Breast epithelium (tissue), 4 donors: ENCODE measurements at regions of chr17 and their contacts with region 1.

Region 1: DNA sequence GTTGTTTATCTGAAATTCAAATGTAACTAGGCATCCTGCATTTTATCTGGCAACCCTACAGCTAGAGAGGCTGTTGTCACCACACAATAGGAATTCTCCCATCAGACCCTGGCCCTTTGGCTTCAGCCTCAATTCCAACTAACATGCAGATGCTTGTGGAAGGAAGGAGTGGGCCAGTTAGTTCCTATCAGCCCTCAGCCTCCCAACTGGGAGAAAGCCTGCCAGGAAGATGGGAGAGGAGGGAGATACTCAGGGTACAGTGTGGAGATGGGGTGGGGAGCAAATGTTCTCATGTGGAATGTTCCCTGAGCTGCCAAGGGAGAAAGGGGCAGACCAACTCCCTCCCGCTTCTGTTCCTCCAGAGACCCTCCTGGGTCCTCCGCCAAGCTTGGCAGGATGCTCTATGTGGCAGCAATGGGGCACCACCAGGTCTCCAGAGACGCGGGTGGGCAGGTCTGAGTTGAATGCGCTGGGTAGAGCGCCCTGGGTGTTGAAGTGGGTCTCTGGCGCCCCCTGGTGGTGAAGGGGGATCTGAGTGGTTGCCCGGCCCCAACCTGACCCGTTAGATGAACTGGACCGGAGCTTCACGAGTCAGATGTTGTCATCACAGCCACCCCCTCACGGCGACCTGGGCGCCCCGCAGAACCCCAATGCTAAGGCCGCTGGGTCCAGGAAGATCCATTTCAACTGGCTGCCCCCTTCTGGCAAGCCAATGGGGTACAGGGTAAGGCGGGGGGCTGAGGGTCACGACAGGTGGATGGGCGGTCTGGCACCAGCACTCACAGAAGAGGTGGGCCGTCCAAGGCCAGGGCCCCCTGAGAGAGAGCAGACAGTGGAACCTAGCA is 15.2 kb downstream of the GALK1 start:
- DNase-seq: peak; percentile 71 to 91
- H3K4me3 ChIP-seq: peak overlapping the region in 1 of 3 donors; percentile 12
- H3K27ac ChIP-seq: peak overlapping the region; percentile 6 to 45
- H3K4me1 ChIP-seq: peaks cover 0 to 5% of the 10 kb centered on the region in 2 donors
- H3K27me3 ChIP-seq: no peaks in the 10 kb centered on the region
- CTCF ChIP-seq: peak; percentile 79 to 94 (median 91)
- POLR2A ChIP-seq: no peak

Region 2: DNA sequence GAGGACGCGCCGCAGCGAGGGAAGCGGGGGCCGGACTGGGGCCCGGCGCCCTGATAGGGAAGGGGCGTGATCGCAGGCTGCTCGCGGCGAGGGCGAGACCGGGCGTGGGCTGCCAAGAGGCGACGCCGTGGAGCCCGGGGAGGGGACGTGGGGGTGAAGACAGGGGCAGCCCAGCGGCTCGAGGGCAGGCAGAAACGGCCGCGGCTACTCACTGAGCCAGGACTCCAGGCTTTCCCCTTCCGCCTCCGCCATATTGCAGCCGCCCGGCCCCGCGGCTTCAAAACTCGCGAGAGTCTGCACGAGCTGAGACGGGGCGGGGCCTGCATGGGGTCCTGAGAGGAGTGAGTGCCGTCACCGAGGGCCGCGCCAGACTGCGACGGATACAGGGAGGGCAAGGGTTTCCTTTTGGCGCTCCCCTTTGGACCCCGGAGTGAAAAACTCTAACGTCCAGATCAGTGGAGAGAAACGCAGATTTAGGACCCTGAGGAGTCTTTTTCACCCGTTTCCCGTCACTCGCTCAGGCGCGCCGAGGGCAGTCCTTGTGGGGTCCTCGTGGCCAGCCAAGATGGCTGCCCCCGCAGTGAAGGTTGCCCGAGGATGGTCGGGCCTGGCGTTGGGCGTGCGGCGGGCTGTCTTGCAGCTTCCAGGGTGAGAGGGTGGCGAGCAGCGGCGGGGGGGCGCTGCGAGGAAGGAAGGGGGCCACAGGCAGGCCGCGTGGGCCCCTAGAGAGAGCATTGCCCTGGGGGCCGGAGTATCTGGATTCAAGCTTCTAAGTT is 488.2 kb before region 1 on chr17 and contains the starts of genes GGA3 and MRPS7:
- intact Hi-C with region 1: no loop called
- DNase-seq: peak; percentile 95 to 96
- H3K4me3 ChIP-seq: peak within 1 kb of the TSS; percentile 89 to 100 (median 99)
- H3K27ac ChIP-seq: peak within 1 kb of the TSS; percentile 97 to 99
- H3K4me1 ChIP-seq: peaks cover 0 to 12% of the 10 kb centered on the region in 2 donors
- H3K27me3 ChIP-seq: no peaks in the 10 kb centered on the region
- CTCF ChIP-seq: peak in 1 of 3 donors; percentile 6
- POLR2A ChIP-seq: peak; percentile 59
- total RNA-seq, gene GGA3: 20.0 to 35.0 (median 32.8) TPM
- total RNA-seq, gene MRPS7: 37.0 to 46.5 (median 40.1) TPM

Region 3: DNA sequence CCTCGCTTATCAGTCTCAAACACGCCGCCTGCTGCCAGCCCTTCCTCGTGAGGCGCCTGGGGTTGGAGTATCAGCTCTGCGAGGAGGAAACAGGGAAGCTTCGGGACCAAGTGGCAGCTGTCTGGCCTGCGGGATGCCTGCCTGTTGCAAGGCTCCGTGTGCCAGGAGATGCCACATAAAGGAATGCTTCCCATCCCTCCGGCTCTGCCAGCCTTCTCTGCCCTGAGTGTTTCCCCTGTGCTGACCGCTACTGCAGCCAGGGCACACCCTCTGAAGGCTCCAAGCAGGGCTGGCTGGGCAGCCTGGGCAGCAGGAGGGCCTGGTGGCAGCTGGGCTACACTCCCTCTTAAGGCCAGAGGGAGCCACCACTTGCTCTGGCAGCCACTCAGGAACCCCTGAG is 114.0 kb before region 1 on chr17:
- intact Hi-C with region 1: loop called (anchors 5 kb)
- DNase-seq: no peak
- H3K4me3 ChIP-seq: no peak overlapping the region
- H3K27ac ChIP-seq: peak overlapping the region in 1 of 2 donors; percentile 90
- H3K4me1 ChIP-seq: peaks cover 13 to 15% of the 10 kb centered on the region in 2 donors
- H3K27me3 ChIP-seq: no peaks in the 10 kb centered on the region
- CTCF ChIP-seq: no peak
- POLR2A ChIP-seq: no peak

Region 4: GRCh38 chr17:75679706-75680442 is 69.9 kb before region 1 on chr17:
- intact Hi-C with region 1: loop called (anchors 2 kb)
- DNase-seq: peak in 1 of 2 donors; percentile 82
- H3K4me3 ChIP-seq: no peak overlapping the region
- H3K27ac ChIP-seq: peak overlapping the region; percentile 84 to 85
- H3K4me1 ChIP-seq: peaks cover 6 to 9% of the 10 kb centered on the region in 2 donors
- H3K27me3 ChIP-seq: no peaks in the 10 kb centered on the region
- CTCF ChIP-seq: peak in 2 of 3 donors; percentile 51 to 75
- POLR2A ChIP-seq: no peak

Region 5: DNA sequence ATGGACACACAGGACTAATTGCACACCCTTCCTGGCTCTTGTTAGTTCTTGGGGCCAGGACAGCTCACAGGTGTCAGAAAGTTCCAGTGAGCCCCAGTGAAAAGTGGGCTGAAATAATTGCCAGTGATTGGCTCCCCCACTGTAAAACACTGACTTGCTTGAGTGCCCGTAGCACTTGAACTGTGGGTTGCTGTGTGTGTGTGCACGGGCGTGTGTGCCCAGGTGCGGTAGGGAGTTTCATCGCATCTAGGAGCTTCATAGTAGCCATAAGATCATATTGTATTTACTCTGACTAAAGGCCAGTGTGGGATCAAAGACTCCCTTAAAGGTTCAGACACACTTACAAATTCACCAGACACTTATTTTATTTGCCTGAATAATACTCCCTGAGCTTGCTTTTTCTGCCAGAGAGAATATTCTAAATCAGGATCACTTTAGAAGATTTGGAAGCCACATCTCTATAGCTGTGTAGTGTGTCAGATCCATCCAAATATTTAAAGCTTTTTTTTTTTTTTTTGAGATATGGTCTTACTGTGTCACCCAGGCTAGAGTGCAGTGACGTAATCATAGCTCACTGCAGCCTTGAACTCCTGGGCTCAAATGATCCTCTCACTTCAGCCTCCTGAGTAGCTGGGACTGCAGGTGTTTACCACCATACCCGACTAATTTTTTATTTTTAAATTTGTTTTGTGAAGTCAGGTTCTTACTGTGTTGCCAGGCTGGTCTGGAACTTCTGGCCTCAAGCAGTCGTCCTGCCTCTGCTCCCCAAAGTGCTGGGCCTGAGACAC is 46.2 kb after region 1 on chr17:
- intact Hi-C with region 1: no loop called
- DNase-seq: no peak
- H3K4me3 ChIP-seq: no peak overlapping the region
- H3K27ac ChIP-seq: no peak overlapping the region
- H3K4me1 ChIP-seq: no peaks in the 10 kb centered on the region
- H3K27me3 ChIP-seq: no peaks in the 10 kb centered on the region
- CTCF ChIP-seq: no peak
- POLR2A ChIP-seq: no peak

Region 6: DNA sequence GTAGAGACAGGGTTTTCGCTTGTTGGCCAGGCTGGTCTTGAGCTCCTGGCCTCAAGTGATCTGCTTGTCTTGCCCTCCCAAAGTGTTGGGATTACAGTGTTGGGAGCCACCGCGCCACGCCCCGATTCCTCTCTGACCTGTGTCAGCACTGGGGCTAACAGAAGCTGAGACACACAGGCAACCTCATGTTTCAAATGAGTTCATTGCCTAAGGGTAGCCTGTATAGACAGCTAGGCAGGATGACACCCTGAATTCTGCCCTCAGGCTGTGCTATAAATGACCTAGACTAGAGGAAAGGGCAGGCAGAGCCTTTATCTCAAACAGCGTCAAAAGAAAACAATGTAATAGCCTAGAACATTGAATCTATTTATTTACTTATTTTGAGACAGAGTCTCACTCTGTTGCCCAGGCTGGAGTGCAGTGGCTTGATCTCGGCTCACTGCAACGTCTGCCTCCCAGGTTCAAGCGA is 248.6 kb after region 1 on chr17:
- intact Hi-C with region 1: loop called (anchors 2 kb)
- DNase-seq: no peak
- H3K4me3 ChIP-seq: no peak overlapping the region
- H3K27ac ChIP-seq: no peak overlapping the region
- H3K4me1 ChIP-seq: peaks cover 0 to 3% of the 10 kb centered on the region in 2 donors
- H3K27me3 ChIP-seq: no peaks in the 10 kb centered on the region
- CTCF ChIP-seq: no peak
- POLR2A ChIP-seq: no peak